ENCODE measurements at regions of chr6 and their contacts with region 1.

Region 1: DNA sequence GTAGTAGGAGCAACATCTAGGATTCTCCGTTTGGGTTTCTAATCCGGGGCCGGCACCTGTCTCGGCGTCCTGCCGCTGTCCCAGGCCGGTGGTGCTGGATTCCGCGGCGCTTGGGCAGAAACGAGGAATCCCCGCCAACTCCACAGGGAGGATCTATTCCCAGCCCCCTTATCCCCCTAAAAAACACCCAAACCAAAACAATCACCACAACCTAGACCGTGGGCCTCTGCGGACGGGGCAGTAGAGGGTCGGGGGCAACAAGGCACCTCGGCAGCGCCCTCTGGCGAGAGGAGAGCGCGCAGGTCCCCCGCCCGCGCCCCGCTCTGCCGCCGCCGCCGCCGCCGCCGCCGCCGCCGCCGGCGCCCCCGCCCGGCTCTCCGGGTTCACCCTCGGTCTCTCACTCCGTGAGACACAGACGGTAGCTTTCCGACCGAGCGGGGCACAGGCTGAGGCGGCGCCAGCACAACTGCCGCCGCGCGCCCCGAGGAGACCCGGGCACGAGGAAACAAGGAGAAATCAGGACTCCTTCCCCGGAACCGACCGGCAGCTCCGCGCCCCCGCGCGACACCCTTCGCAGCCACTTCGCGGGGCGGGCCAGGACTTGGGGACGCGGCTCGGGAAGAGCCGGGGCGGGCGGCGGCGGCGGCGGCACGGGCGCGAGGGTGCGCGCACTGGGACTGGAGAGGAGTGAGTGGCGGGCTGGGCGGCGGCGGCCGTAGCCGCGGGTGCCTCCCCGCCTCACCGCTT is at the start of gene SLC35F1:
- DNase-seq: peak; percentile 16 to 19
- ATAC-seq: peak; percentile 63 to 85 (median 71)
- H3K4me3 ChIP-seq: peak within 1 kb of the TSS; percentile 25 to 67 (median 57)
- H3K27ac ChIP-seq: no peak within 1 kb of the TSS
- H3K4me1 ChIP-seq: peaks cover 0 to 18% (median 9%) of the 10 kb centered on the region in 9 donors
- H3K27me3 ChIP-seq: peaks cover 6 to 72% (median 50%) of the 10 kb centered on the region in 7 donors
- CTCF ChIP-seq: peak in 8 of 9 donors; percentile 13 to 54 (median 41)
- total RNA-seq, gene SLC35F1: 2.0 to 17.7 (median 6.9) TPM

Region 2: GRCh38 chr6:118263921-118264486 is 357.0 kb after region 1 on chr6:
- intact Hi-C with region 1: loop called in 1 of 10 experiments (anchors 10 kb)
- DNase-seq: no peak
- ATAC-seq: peak in 6 of 8 donors; percentile 61 to 83 (median 72)
- H3K4me3 ChIP-seq: no peak overlapping the region
- H3K27ac ChIP-seq: no peak overlapping the region
- H3K4me1 ChIP-seq: no peaks in the 10 kb centered on the region
- H3K27me3 ChIP-seq: no peaks in the 10 kb centered on the region
- CTCF ChIP-seq: peak in 8 of 9 donors; percentile 23 to 67 (median 57)